CD4-positive, alpha-beta T cell (primary cell): ENCODE measurements at regions of chr11 and their contacts with region 1.

Region 1: DNA sequence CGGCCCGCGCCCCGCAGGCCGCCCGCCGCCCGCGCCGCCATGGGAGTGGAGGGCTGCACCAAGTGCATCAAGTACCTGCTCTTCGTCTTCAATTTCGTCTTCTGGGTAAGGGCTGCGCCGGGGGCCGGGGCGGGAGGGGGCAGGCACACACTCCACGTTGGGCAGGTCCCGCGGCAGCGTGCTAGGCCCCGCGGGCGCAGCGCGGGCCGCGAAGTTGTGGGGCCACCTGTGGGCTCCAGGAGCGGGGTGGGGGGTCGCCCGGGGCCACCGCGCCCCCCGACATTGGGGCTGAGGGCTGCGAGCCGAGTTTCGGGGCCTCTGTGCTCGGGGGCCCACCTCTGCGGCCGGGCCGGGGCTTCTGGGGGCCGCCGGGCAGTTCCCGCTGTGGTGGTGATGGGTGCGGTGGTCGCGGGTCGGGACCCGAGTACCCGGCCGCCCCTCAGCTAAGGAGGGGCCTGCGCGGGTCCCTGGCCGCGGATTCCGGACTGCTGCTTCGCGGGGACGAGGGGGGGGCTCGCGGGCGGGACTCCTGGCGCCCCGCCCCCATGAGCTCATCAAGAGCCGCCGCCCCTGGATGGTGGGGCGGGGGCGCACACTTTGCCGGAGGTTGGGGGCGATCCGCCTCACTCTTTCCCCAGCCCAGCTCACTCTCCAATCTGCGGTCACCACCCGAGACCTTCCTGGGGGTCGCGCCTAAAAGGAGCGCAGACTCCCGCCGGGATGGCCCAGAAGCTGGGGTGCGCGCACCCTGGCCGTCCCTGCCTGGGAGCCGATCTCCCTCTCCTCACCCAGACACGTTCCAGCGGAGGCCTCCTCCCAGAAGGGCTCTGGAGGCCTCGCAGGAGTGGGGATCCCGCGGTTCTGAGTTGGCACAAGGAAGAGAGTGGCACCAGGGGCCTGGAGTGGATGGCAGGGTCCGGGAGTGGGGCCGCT is 667 bp downstream of the CD81 start:
- DNase-seq: peak; percentile 29 to 80 (median 52)
- ATAC-seq: peak; percentile 53
- H3K4me3 ChIP-seq: peak overlapping the region; percentile 90
- H3K4me3 Mint-ChIP-seq: peak overlapping the region; percentile 82
- H3K27ac ChIP-seq: peak overlapping the region; percentile 67 to 73
- H3K27ac Mint-ChIP-seq: peak overlapping the region; percentile 69
- H3K4me1 ChIP-seq: peaks cover 55% of the 10 kb centered on the region
- H3K4me1 Mint-ChIP-seq: peaks cover 32% of the 10 kb centered on the region
- H3K27me3 ChIP-seq: no peaks in the 10 kb centered on the region
- H3K27me3 Mint-ChIP-seq: no peaks in the 10 kb centered on the region
- CTCF ChIP-seq: no peak

Region 2: GRCh38 chr11:2298795-2299761 is 78.7 kb before region 1 on chr11:
- CTCF ChIA-PET with region 1: no interaction called
- POLR2A ChIA-PET with region 1: interaction called, 36 read pairs
- intact Hi-C with region 1: loop called in 1 of 2 experiments (anchors 5 kb)
- DNase-seq: peak in 4 of 14 experiments; percentile 18 to 31 (median 23)
- ATAC-seq: no peak
- H3K4me3 ChIP-seq: no peak overlapping the region
- H3K4me3 Mint-ChIP-seq: peak overlapping the region; percentile 87
- H3K27ac ChIP-seq: peak overlapping the region; percentile 12 to 54
- H3K27ac Mint-ChIP-seq: peak overlapping the region; percentile 89
- H3K4me1 ChIP-seq: peaks cover 49% of the 10 kb centered on the region
- H3K4me1 Mint-ChIP-seq: peaks cover 53% of the 10 kb centered on the region
- H3K27me3 ChIP-seq: no peaks in the 10 kb centered on the region
- H3K27me3 Mint-ChIP-seq: no peaks in the 10 kb centered on the region
- CTCF ChIP-seq: peak; percentile 22

Region 3: DNA sequence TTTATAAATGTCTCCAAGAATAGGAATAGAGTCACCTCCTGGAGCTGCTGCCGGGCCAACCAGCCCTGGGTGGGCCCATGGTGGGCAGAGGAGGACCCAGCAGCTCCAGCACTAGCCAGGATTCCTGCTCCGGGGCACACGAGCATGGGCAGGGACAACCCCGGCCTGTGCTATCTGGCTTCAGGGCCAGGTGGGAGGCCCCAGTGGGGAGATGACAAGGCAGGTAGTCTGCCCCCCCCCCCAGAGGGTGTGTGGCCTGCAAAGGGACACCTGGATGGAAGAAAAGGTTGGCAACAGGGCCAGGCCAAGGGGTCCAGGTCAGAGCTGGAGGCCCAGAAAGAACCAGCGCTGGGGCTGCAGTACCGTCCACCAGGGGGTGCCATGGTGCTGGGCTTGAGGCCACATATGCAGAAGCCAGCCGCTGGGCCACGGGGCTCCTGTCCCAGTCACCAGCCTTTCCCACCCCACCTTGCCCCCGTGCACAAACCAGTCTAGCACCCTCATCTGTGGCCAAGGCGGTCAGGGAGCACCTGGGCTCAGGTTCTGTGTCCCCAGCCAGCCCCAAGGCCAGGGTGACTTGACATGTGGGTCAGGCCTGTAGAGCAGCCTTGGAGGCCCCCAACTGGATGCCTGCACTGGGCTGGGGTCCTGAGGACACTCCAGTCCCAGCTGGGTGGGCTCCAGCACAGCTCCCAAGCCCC is 72.5 kb before region 1 on chr11:
- CTCF ChIA-PET with region 1: no interaction called
- POLR2A ChIA-PET with region 1: interaction called, 36 read pairs
- intact Hi-C with region 1: loop called in 1 of 2 experiments (anchors 5 kb)
- DNase-seq: peak; percentile 61 to 93 (median 82)
- ATAC-seq: peak; percentile 23
- H3K4me3 ChIP-seq: peak overlapping the region; percentile 47
- H3K4me3 Mint-ChIP-seq: peak overlapping the region; percentile 80
- H3K27ac ChIP-seq: peak overlapping the region; percentile 40 to 72
- H3K27ac Mint-ChIP-seq: peak overlapping the region; percentile 94
- H3K4me1 ChIP-seq: peaks cover 71% of the 10 kb centered on the region
- H3K4me1 Mint-ChIP-seq: peaks cover 60% of the 10 kb centered on the region
- H3K27me3 ChIP-seq: no peaks in the 10 kb centered on the region
- H3K27me3 Mint-ChIP-seq: no peaks in the 10 kb centered on the region
- CTCF ChIP-seq: peak; percentile 50

Region 4: GRCh38 chr11:3378426-3379423 is 1000.9 kb after region 1 on chr11 and contains the start of gene ZNF195:
- CTCF ChIA-PET with region 1: no interaction called
- POLR2A ChIA-PET with region 1: no interaction called
- intact Hi-C with region 1: loop called in 1 of 2 experiments (anchors 10 kb)
- DNase-seq: peak; percentile 92 to 98 (median 96)
- ATAC-seq: peak; percentile 100
- H3K4me3 ChIP-seq: peak within 1 kb of the TSS; percentile 89
- H3K4me3 Mint-ChIP-seq: peak within 1 kb of the TSS; percentile 100
- H3K27ac ChIP-seq: peak within 1 kb of the TSS; percentile 68 to 77
- H3K27ac Mint-ChIP-seq: peak within 1 kb of the TSS; percentile 96
- H3K4me1 ChIP-seq: peaks cover 30% of the 10 kb centered on the region
- H3K4me1 Mint-ChIP-seq: peaks cover 54% of the 10 kb centered on the region
- H3K27me3 ChIP-seq: no peaks in the 10 kb centered on the region
- H3K27me3 Mint-ChIP-seq: no peaks in the 10 kb centered on the region
- CTCF ChIP-seq: no peak
- total RNA-seq, gene ZNF195: 16.6 to 18.4 TPM